ENCODE measurements at regions of chr9 and their contacts with region 1.

Region 1: DNA sequence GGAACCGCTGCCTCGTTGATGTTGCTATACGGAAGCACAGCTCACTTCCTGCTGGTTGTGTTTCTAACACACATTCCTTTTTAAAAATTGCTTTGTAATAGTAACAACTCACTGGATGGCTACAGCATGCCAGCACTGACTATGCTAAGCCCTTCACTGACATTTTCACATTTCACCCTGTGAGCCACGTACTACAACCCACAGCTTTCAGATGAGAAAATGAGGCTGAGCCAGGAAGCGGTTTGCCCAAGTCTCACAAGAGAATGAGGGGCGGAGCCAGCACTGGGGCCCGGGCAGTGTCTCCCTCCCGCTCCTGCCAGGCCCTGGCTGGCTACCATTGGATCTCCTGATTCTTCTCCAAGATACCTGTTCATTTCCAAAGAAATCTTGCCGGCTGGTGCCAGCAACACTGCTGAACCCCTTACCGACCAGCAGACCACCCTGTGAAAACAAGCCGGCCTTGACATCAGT is 38.3 kb downstream of the FAM78A start:
- DNase-seq: peak; percentile 94
- H3K4me3 ChIP-seq: no peak overlapping the region
- H3K27ac ChIP-seq: peak overlapping the region; percentile 97
- H3K4me1 ChIP-seq: peaks cover 32% of the 10 kb centered on the region
- H3K27me3 ChIP-seq: no peaks in the 10 kb centered on the region
- CTCF ChIP-seq: no peak
- POLR2A ChIP-seq: peak; percentile 72

Region 2: GRCh38 chr9:131116281-131117115 is 121.5 kb before region 1 on chr9:
- CTCF ChIA-PET with region 1: no interaction called
- POLR2A ChIA-PET with region 1: no interaction called
- dilution Hi-C with region 1: no loop called
- intact Hi-C with region 1: loop called (anchors 1 kb)
- DNase-seq: no peak
- H3K4me3 ChIP-seq: peak overlapping the region in 1 of 3 experiments; percentile 22
- H3K27ac ChIP-seq: peak overlapping the region; percentile 96
- H3K4me1 ChIP-seq: peaks cover 27% of the 10 kb centered on the region
- H3K27me3 ChIP-seq: no peaks in the 10 kb centered on the region
- CTCF ChIP-seq: no peak
- POLR2A ChIP-seq: no peak

Region 3: DNA sequence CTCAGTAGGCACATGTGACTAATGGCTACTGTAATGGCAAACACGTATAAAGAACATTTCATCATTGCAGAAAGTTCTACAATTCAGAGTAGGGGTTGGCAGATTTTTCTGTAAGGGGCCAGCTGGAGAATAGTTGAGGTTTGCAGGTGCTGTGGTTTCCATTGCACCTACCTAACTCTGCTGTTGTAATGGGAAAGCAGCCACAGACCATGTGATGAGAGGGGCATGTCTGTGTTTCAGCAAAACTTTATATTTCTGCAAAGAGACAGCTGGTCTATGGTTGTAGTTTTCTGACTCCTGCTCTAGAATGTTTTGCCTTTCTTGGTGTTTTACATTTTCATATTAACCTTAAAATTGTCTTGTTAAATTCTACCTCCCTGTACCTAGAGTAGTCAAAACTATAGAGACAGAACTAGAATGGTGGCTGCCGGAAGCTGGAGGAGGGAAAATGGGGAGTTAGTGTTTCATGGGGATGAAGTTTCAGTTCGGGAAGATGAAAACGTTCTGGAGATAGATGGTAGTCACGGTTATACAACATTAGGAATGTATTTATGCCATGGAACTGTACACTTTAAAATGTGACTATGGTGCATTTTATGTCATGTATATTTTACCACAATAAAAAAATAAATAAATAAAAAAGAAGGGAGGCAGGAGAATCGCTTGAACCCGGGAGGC is 68.3 kb before region 1 on chr9:
- CTCF ChIA-PET with region 1: no interaction called
- POLR2A ChIA-PET with region 1: no interaction called
- dilution Hi-C with region 1: no loop called
- intact Hi-C with region 1: no loop called
- DNase-seq: no peak
- H3K4me3 ChIP-seq: no peak overlapping the region
- H3K27ac ChIP-seq: no peak overlapping the region
- H3K4me1 ChIP-seq: no peaks in the 10 kb centered on the region
- H3K27me3 ChIP-seq: no peaks in the 10 kb centered on the region
- CTCF ChIP-seq: no peak
- POLR2A ChIP-seq: no peak

Region 4: DNA sequence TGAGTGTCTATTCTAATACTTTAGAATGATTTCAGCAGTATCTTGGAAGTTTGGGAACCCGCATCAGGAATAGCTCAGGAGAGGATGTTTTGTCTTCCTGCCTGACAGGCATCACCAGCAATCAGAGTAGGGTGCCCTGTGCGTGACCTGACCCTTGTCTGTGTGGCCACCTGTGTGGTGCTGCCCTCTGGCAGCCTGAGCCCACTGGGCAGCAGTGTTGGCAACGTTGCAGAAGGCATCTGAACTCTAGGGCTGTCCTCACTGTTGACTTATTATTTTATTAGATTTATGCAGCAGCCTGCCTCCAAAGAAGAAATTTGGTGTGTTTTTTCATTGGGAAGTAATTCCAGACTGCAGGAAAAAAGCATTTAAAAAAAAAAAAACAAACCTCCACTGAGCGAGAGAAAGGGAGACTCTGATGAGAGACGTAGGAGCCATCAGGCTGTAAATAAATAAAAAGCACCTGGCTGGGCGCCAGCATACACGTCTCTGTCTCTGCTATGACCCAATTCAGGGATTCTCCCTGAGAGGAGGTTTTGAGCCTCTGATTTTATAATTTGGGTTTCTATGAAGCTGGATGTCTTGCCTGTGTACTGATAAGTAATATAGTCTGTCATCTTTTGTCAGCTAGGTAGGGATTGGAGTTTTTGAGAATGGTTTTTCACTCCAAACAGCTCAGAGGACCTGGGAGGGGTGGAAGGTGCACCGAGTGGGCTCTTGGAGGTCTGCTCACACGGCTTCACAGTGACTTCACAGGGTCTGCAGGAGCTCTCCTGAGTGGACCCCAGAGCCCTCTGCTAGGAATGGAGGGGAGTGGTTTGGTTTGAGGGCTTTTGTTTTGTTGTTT is 10.6 kb before region 1 on chr9:
- CTCF ChIA-PET with region 1: no interaction called
- POLR2A ChIA-PET with region 1: no interaction called
- dilution Hi-C with region 1: no loop called
- intact Hi-C with region 1: loop called (anchors 1 kb)
- DNase-seq: peak; percentile 65
- H3K4me3 ChIP-seq: no peak overlapping the region
- H3K27ac ChIP-seq: no peak overlapping the region
- H3K4me1 ChIP-seq: peaks cover 39% of the 10 kb centered on the region
- H3K27me3 ChIP-seq: no peaks in the 10 kb centered on the region
- CTCF ChIP-seq: no peak
- POLR2A ChIP-seq: no peak

Region 5: DNA sequence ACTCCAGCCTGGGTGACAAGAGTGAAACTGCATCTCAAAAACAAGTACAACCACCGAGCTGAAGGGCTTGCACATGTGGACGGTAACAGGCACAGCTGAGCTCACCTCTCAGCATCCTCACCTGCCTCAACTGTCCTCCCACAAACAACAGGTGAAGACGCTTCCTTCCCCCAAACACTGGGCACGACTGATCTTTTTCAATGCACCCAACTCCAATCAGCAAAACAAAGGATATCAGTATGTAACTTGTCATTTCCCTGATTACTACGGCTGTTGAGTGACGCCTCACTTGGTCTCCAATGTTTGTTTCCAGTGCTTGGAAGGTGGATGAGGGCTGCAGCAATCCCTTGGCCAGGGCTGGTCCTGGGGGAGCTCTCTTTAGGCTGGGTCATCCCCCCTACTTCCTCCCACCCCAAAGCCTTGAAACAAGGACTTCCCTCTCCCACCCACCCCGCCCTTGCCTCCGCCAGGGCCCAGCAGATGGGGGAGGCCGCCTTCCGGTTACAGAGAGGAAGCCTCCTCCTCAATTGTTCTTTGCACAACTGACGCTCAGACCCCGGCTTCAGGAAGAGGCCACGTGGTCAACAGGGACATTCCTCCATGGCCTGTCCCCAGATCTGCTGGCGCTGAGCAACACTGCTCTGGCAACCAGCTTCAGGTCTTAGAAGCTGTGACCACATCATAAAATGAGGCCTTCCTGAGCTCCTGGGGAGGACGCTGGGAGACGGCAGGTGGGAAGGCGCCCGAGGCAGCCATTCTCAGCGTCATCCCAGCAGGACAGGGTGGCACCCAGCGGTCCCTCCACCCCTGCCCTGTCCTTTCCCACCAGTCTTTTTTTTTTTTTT is 32.4 kb after region 1 on chr9:
- CTCF ChIA-PET with region 1: interaction called, 3 read pairs
- POLR2A ChIA-PET with region 1: interaction called, 3 read pairs
- dilution Hi-C with region 1: no loop called
- intact Hi-C with region 1: loop called (anchors 1 kb)
- DNase-seq: peak; percentile 73
- H3K4me3 ChIP-seq: no peak overlapping the region
- H3K27ac ChIP-seq: peak overlapping the region; percentile 67
- H3K4me1 ChIP-seq: peaks cover 54% of the 10 kb centered on the region
- H3K27me3 ChIP-seq: no peaks in the 10 kb centered on the region
- CTCF ChIP-seq: no peak
- POLR2A ChIP-seq: no peak

Region 6: DNA sequence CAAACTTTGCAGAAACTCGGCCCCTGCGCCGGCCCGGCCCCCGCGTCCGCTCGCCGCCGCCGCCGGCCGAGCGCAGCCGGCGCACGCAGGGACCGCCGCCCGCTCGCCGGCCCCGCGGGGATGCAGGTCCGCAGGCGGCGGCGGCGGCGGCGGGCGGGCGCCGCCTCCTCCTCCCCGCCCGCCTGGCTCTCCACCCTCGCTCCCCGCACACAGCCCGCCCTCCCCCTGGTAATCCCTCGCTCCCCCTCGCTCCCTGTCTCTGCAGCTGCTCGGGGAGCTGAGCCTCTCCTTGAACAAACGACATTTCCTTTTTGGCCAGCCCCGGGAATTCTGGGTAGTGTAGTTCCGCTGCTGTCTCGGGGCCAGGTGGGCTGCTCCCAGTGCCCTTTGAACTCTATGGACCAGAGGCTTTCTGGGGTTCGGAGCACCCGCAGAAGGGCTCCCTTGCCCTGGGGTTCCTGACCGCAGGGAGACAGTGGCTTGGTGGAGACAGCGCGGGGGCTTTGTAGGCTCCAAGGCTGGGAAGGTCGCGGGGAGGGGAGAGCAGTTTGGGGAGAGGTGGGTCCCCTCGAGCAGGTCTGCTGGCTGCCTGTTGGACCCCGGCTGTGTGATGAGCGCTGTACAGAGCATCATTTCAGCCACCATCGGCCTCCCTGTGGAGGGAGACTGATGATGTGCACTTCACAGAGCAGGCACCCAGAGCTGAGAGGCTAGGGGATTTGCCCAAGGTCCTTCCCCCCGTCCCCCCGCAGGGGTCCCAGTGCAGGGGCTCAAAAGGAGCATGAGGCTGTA is 40.1 kb after region 1 on chr9:
- CTCF ChIA-PET with region 1: interaction called, 7 read pairs
- POLR2A ChIA-PET with region 1: no interaction called
- dilution Hi-C with region 1: no loop called
- intact Hi-C with region 1: loop called (anchors 1 kb)
- DNase-seq: peak; percentile 86
- H3K4me3 ChIP-seq: peak overlapping the region in 2 of 3 experiments; percentile 31 to 81
- H3K27ac ChIP-seq: no peak overlapping the region
- H3K4me1 ChIP-seq: peaks cover 30% of the 10 kb centered on the region
- H3K27me3 ChIP-seq: peaks cover 14 to 18% of the 10 kb centered on the region in 2 experiments
- CTCF ChIP-seq: no peak
- POLR2A ChIP-seq: no peak

Measured in endothelial cell of umbilical vein (primary cell).